ENCODE measurements at regions of chr1 and their contacts with region 1.

Region 1: DNA sequence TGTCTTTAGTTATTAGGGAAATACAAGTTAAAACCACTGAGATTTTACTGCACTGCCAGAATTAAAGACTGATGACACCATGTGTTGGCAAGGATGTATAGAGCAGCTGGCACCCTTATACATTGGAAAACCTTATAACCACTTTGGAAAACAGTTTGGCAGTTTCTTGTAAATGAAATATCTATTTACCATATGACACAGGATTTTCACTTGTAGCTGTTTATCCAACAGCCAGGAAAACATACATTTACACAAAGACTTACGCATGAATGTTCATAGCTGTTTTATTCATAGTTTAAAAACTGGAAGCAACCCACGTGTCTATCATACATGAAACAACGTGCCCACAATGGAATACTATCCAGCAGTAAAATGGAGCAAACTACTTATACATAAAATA is 45.3 kb downstream of the PRRC2C start:
- H3K4me3 Mint-ChIP-seq: no peak overlapping the region
- H3K27ac Mint-ChIP-seq: no peak overlapping the region
- H3K4me1 Mint-ChIP-seq: no peaks in the 10 kb centered on the region
- H3K27me3 Mint-ChIP-seq: no peaks in the 10 kb centered on the region

Region 2: GRCh38 chr1:171570295-171570694 is 39.6 kb after region 1 on chr1:
- intact Hi-C with region 1: loop called (anchors 5 kb)
- H3K4me3 Mint-ChIP-seq: no peak overlapping the region
- H3K27ac Mint-ChIP-seq: no peak overlapping the region
- H3K4me1 Mint-ChIP-seq: no peaks in the 10 kb centered on the region
- H3K27me3 Mint-ChIP-seq: no peaks in the 10 kb centered on the region

Region 3: GRCh38 chr1:171588230-171588629 is 57.6 kb after region 1 on chr1:
- intact Hi-C with region 1: loop called (anchors 5 kb)
- H3K4me3 Mint-ChIP-seq: no peak overlapping the region
- H3K27ac Mint-ChIP-seq: no peak overlapping the region
- H3K4me1 Mint-ChIP-seq: no peaks in the 10 kb centered on the region
- H3K27me3 Mint-ChIP-seq: no peaks in the 10 kb centered on the region